Activated CD4-positive, alpha-beta memory T cell treated with anti-CD3 and anti-CD28 coated beads for 36 hours (primary cell): ENCODE measurements at regions of chr19 and their contacts with region 1.

Region 1: DNA sequence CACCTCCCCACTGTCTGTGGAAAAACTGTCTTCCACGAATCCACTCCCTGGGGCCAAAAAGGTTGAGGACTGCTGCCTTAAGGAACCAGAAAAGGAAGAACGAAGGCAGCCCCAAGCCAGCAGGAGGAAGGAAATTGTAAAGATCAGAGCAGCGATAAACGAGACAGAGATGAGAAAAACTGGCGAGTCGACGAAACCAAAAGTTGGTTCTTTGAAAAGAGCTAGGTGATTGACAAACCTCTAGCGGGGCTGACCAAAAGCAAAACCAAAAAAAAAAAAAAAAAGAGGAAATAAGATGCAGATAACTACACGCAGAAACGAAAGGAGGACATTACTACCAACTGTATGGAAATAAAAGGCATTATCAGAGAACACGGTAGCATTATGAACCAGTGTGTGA is 76.9 kb downstream of the GADD45B start:
- DNase-seq: peak; percentile 69
- H3K4me3 Mint-ChIP-seq: peak overlapping the region; percentile 59
- H3K27ac Mint-ChIP-seq: peak overlapping the region; percentile 72
- H3K4me1 Mint-ChIP-seq: peaks cover 19% of the 10 kb centered on the region
- H3K27me3 Mint-ChIP-seq: no peaks in the 10 kb centered on the region

Region 2: DNA sequence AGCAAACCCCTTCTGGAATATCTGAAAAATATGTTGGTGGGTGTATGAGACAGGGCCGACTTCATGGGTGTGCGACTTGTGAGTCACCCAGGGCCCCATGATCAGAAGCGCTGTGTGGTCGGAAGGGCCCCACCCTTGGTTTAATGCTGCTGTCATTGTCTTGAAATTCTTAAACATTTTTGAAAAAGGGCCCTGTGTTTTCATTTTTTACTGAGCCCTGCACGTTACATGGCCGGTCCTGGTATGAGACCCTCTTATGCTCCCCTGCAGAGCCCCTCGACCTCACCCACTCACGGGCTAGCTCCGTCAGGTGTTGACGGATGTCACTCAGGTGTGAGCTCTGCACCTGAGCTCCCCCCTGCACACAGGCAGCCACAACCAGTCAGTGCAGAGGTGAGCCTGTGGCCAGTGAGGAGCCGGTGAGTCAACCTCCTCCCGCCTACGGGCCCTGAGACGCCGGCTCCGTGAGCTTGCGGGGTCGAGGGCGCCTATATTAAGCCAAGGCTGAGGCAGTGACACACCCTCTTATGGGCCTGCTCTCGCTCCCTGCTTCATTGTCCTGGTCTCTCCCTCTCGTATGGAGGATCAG is 49.2 kb before region 1 on chr19:
- CTCF ChIA-PET with region 1: no interaction called
- POLR2A ChIA-PET with region 1: no interaction called
- intact Hi-C with region 1: loop called (anchors 2 kb)
- DNase-seq: peak; percentile 83
- H3K4me3 Mint-ChIP-seq: peak overlapping the region; percentile 49
- H3K27ac Mint-ChIP-seq: peak overlapping the region; percentile 76
- H3K4me1 Mint-ChIP-seq: peaks cover 27% of the 10 kb centered on the region
- H3K27me3 Mint-ChIP-seq: peaks cover 6% of the 10 kb centered on the region

Region 3: DNA sequence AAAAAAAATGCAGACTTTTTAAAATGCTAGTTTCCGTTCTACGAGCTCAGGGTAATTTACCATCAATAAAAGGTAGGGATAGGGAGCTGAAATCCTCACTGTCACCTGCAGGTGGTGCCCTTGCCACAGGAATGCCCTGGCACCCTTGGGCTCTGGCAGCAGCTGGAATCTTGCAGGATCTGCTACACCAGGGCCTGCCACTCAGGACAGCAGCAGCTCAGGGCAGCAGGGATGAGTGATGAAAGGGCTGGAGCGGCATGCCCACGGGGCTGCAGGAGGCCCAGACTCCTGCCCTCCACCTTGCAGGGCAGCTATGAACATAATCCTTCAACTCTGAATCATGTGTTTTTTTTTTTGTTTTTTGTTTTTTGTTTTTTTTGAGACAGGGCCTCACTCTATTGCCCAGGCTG is 95.7 kb after region 1 on chr19:
- CTCF ChIA-PET with region 1: no interaction called
- POLR2A ChIA-PET with region 1: no interaction called
- intact Hi-C with region 1: no loop called
- DNase-seq: peak; percentile 82
- H3K4me3 Mint-ChIP-seq: no peak overlapping the region
- H3K27ac Mint-ChIP-seq: no peak overlapping the region
- H3K4me1 Mint-ChIP-seq: no peaks in the 10 kb centered on the region
- H3K27me3 Mint-ChIP-seq: no peaks in the 10 kb centered on the region